ENCODE measurements at regions of chr6 and their contacts with region 1.

Region 1: GRCh38 chr6:118893807-118894424 is at the start of gene ASF1A:
- DNase-seq: peak; percentile 98
- ATAC-seq: peak; percentile 96
- H3K4me3 ChIP-seq: peak within 1 kb of the TSS; percentile 91 to 92
- H3K27ac ChIP-seq: peak within 1 kb of the TSS; percentile 83 to 93
- H3K4me1 ChIP-seq: peaks cover 0 to 6% of the 10 kb centered on the region in 2 donors
- H3K27me3 ChIP-seq: no peaks in the 10 kb centered on the region
- total RNA-seq, gene ASF1A: 11.5 to 12.9 TPM

Region 2: GRCh38 chr6:118776607-118777549 is 117.0 kb before region 1 on chr6:
- intact Hi-C with region 1: no loop called
- DNase-seq: peak in 1 of 2 donors; percentile 73
- ATAC-seq: peak; percentile 83
- H3K4me3 ChIP-seq: no peak overlapping the region
- H3K27ac ChIP-seq: no peak overlapping the region
- H3K4me1 ChIP-seq: no peaks in the 10 kb centered on the region
- H3K27me3 ChIP-seq: no peaks in the 10 kb centered on the region

Region 3: GRCh38 chr6:118934461-118935330 is 40.8 kb after region 1 on chr6 and contains the start of gene MCM9:
- intact Hi-C with region 1: loop called (anchors 2 to 5 kb)
- DNase-seq: peak; percentile 96 to 98
- ATAC-seq: peak; percentile 98
- H3K4me3 ChIP-seq: peak within 1 kb of the TSS; percentile 58 to 84
- H3K27ac ChIP-seq: peak within 1 kb of the TSS; percentile 45 to 62
- H3K4me1 ChIP-seq: peaks cover 0 to 2% of the 10 kb centered on the region in 2 donors
- H3K27me3 ChIP-seq: no peaks in the 10 kb centered on the region
- total RNA-seq, gene MCM9: 14.8 to 19.1 TPM

Region 4: GRCh38 chr6:119186490-119186889 is 292.6 kb after region 1 on chr6:
- intact Hi-C with region 1: no loop called
- DNase-seq: no peak
- ATAC-seq: no peak
- H3K4me3 ChIP-seq: no peak overlapping the region
- H3K27ac ChIP-seq: no peak overlapping the region
- H3K4me1 ChIP-seq: peaks cover 0 to 2% of the 10 kb centered on the region in 2 donors
- H3K27me3 ChIP-seq: no peaks in the 10 kb centered on the region

Measured in aorta (tissue), 5 donors.